Activated CD4-positive, alpha-beta memory T cell treated with anti-CD3 and anti-CD28 coated beads, Interleukin-2, amount 10 ng/mL, durations not matched to agents 7 days and 5 days (primary cell): ENCODE measurements at regions of chr14 and their contacts with region 1.

Region 1: DNA sequence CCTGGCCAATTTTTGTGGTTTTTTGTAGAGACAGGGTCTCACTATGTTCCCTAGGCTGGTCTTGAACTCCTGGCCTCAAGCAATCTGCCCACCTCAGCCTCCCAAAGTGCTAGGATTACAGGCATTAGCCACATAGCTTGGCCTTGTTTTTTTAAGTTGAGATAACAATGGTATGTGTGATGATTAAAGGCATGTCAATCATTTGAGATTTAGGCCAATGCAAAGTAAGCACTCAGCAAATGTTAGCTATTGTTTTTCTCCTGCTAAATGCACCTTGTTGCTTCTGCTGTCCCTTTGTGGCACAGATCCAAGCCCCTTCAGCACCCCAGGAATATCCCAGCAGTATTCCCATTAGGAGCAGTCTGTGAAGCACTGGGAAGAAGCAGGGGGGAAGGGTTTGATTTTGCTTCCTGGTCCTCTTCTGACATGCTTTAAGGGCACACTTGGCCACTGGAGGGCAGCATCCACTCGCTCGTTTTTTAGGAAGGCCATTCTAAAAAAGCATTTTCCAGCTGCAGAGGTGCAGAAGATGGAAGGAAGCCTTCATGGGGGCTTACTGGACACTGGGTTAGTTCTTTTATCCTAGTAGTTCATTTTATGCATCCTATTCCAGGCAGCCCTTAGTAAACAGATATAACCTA is 70.2 kb upstream of the ZFP36L1 start:
- DNase-seq: peak; percentile 74
- H3K4me3 Mint-ChIP-seq: no peak overlapping the region
- H3K27ac Mint-ChIP-seq: no peak overlapping the region
- H3K4me1 Mint-ChIP-seq: no peaks in the 10 kb centered on the region
- H3K27me3 Mint-ChIP-seq: no peaks in the 10 kb centered on the region

Region 2: GRCh38 chr14:68703093-68703492 is 160.0 kb before region 1 on chr14:
- CTCF ChIA-PET with region 1: no interaction called
- POLR2A ChIA-PET with region 1: no interaction called
- DNase-seq: no peak
- H3K4me3 Mint-ChIP-seq: no peak overlapping the region
- H3K27ac Mint-ChIP-seq: no peak overlapping the region
- H3K4me1 Mint-ChIP-seq: peaks cover 4% of the 10 kb centered on the region
- H3K27me3 Mint-ChIP-seq: peaks cover 2% of the 10 kb centered on the region

Region 3: GRCh38 chr14:68795597-68796417 is 67.3 kb before region 1 on chr14:
- CTCF ChIA-PET with region 1: no interaction called
- POLR2A ChIA-PET with region 1: no interaction called
- DNase-seq: peak; percentile 84
- H3K4me3 Mint-ChIP-seq: peak overlapping the region; percentile 92
- H3K27ac Mint-ChIP-seq: peak overlapping the region; percentile 100
- H3K4me1 Mint-ChIP-seq: peaks cover 34% of the 10 kb centered on the region
- H3K27me3 Mint-ChIP-seq: no peaks in the 10 kb centered on the region

Region 4: DNA sequence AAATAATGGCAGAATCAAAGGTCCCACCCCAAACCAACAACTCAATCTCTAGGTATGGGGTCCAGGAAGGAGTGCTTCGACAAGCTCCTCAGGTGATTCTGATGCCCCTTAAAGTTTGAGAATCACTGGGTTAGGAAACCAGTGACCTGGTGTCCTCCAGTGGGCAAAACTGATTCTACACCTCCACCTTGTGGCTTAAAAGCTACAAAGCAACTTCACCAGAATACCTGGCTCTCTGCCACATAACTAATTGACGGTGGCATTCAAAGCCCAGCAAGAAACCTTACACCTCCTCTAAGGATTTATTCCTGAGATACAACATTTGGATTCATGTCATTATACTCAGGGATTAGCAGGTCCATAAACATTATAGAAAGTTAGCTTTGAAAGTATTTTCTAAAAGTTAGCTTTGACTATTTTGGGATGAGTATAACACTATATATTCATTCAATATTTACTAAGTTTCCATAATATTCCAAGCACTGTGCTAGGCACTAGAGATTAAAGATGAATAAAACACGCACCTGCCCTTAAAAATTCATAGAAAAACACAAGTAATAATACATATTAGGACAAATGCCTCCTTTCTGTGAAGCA is 244.4 kb after region 1 on chr14:
- CTCF ChIA-PET with region 1: interaction called, 37 read pairs
- POLR2A ChIA-PET with region 1: no interaction called
- DNase-seq: peak; percentile 24
- H3K4me3 Mint-ChIP-seq: no peak overlapping the region
- H3K27ac Mint-ChIP-seq: no peak overlapping the region
- H3K4me1 Mint-ChIP-seq: peaks cover under 1% of the 10 kb centered on the region
- H3K27me3 Mint-ChIP-seq: no peaks in the 10 kb centered on the region